ENCODE measurements at regions of chr17 and their contacts with region 1.

Region 1: DNA sequence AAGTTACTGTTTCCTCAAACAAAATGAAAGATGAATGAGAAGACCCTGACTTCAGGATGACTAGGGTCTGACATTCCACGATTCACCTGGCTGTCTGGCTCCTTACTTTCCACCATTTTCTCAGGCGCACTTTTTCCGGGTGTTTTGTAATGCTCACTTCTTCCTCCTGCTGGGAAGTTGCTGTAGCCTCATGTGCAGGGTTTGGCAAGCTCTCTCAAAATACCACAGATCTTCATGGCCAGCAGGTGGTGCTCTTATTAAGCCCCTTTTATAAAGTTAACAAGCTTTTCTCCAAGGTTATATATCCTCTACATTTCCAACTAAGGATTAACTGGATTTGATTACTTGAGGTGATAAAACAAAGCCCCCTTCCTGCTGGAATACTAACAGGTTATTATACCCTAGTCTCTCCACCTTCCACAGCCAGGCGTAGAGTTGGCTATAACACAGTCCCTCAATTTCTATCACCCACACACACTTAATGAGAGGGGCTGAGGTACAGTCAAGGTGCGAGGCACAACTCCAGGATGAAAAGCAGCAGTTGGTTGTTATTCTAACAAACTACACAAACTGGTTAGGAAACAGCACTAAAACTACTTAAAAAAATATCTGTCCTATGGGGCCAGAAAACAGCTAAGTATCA is 45.4 kb downstream of the STH start:
- DNase-seq: peak; percentile 92
- ATAC-seq: peak; percentile 75
- H3K4me3 ChIP-seq: no peak overlapping the region
- H3K27ac ChIP-seq: no peak overlapping the region
- H3K4me1 ChIP-seq: peaks cover 11% of the 10 kb centered on the region; the same call in 1 of the 2 replicates
- H3K27me3 ChIP-seq: no peaks in the 10 kb centered on the region
- CTCF ChIP-seq: peak; percentile 99

Region 2: DNA sequence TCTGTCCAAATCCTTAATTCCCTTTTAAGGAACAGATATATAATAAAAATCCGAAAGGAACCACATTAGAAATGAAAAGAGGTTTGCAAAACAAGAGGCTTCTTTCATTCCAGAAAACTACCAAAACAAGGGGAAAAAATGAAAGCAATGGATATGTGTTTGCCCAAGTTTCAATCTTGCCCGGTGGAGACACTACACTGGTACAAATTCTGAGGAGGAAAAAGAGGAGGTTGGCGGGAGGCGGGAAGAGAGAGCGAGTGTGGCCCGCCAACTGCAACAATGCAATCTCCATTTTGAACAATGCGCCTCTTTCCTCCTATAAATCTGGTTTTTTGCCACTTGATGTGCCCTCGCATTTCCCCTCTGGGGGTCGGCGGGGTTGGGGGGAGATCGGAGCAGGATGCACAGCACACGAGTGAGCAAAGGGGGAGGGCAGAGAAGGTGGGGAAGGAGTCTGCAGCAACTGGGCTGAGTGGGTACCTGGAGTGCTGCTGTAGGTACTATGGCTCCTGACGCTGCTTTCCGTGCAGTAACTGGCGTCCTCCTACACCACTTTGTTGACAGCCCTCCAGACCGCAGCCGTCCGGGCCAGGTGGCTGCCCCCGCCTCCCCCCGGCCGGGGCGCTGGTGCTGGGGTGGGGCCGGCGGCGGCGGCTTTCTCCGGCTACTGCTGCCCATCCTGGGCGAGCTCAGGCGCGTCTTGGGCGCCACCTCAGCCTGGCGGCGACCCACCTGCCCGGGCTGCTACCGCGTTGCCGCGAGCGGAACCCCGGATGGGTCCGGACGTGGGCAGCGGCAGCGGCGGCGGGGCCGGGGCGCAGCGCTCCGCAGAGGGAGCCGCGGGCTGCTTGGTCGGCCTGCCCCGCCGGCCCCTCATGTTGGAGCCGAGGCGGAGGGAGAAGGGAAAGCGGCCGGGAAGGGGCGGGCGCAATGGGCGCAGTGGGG is 460.0 kb before region 1 on chr17:
- CTCF ChIA-PET with region 1: no interaction called
- POLR2A ChIA-PET with region 1: no interaction called
- intact Hi-C with region 1: no loop called
- DNase-seq: peak; percentile 91
- ATAC-seq: peak; percentile 66
- H3K4me3 ChIP-seq: peak overlapping the region; percentile 74
- H3K27ac ChIP-seq: peak overlapping the region; percentile 57
- H3K4me1 ChIP-seq: peaks cover 12% of the 10 kb centered on the region
- H3K27me3 ChIP-seq: no peaks in the 10 kb centered on the region
- CTCF ChIP-seq: no peak

Region 3: DNA sequence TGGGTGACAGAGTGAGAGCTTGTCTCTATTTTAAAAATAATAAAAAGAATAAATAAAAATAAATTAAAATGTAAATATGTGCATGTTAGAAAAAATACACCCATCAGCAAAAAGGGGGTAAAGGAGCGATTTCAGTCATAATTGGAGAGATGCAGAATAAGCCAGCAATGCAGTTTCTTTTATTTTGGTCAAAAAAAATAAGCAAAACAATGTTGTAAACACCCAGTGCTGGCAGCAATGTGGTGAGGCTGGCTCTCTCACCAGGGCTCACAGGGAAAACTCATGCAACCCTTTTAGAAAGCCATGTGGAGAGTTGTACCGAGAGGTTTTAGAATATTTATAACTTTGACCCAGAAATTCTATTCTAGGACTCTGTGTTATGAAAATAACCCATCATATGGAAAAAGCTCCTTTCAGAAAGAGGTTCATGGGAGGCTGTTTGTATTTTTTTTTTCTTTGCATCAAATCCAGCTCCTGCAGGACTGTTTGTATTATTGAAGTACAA is 36.9 kb before region 1 on chr17:
- CTCF ChIA-PET with region 1: interaction called, 5 read pairs
- POLR2A ChIA-PET with region 1: interaction called, 10 read pairs
- intact Hi-C with region 1: loop called (anchors 1 kb)
- DNase-seq: no peak
- ATAC-seq: no peak
- H3K4me3 ChIP-seq: no peak overlapping the region
- H3K27ac ChIP-seq: no peak overlapping the region
- H3K4me1 ChIP-seq: peaks cover 12% of the 10 kb centered on the region
- H3K27me3 ChIP-seq: no peaks in the 10 kb centered on the region
- CTCF ChIP-seq: no peak

Region 4: DNA sequence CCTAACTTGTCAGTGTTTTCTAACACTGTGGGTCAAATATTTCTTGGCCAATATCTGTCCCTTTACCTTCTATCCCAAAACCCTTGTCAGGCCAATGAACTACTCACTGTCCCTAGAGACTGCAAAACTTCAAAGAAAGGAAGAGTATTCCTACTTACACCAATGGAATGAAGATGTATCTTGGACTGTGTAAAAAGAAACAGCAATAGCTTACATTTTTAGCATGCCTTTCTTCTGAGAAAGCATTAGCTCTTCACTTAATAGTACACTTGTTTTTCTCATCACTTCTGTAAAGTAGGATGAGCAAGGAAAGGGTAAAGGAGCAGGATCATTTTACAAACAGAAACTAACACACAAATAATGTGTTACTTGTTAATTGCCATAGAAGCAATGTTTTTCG is 28.6 kb after region 1 on chr17:
- CTCF ChIA-PET with region 1: no interaction called
- POLR2A ChIA-PET with region 1: no interaction called
- intact Hi-C with region 1: no loop called
- DNase-seq: peak; percentile 60
- ATAC-seq: peak; percentile 70
- H3K4me3 ChIP-seq: no peak overlapping the region
- H3K27ac ChIP-seq: no peak overlapping the region
- H3K4me1 ChIP-seq: 0 out of 2 replicates have a peak, but pooled peaks cover 14% of the 10 kb centered on the region
- H3K27me3 ChIP-seq: no peaks in the 10 kb centered on the region
- CTCF ChIP-seq: no peak

Region 5: DNA sequence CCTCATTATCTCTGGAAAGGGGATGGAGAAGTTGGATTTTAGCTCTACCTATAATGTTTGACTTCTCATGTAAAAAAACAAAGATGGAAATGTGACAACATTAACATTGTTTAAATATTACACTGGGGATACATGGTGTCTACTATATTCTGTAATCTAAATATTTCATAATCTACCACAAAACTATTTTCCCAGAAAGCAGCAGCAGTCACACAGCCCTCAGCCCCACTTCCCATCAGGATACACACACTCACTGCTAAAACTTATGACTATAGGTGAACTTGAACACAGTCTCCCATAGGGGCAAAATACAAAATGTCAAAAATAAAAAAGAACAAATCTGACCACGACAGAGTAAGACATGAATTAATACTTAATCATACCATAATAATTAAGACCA is 53.1 kb after region 1 on chr17:
- CTCF ChIA-PET with region 1: no interaction called
- POLR2A ChIA-PET with region 1: interaction called, 31 read pairs
- intact Hi-C with region 1: loop called (anchors 5 kb)
- DNase-seq: no peak
- ATAC-seq: no peak
- H3K4me3 ChIP-seq: no peak overlapping the region
- H3K27ac ChIP-seq: no peak overlapping the region
- H3K4me1 ChIP-seq: peaks cover 9% of the 10 kb centered on the region
- H3K27me3 ChIP-seq: no peaks in the 10 kb centered on the region
- CTCF ChIP-seq: no peak

Region 6: GRCh38 chr17:46193626-46194392 is 149.4 kb after region 1 on chr17:
- CTCF ChIA-PET with region 1: interaction called, 28 read pairs
- POLR2A ChIA-PET with region 1: no interaction called
- intact Hi-C with region 1: loop called (anchors 1 kb)
- DNase-seq: peak; percentile 99
- ATAC-seq: peak; percentile 92
- H3K4me3 ChIP-seq: peak overlapping the region; percentile 87
- H3K27ac ChIP-seq: peak overlapping the region; percentile 83
- H3K4me1 ChIP-seq: peaks cover 24% of the 10 kb centered on the region
- H3K27me3 ChIP-seq: no peaks in the 10 kb centered on the region
- CTCF ChIP-seq: peak; percentile 41; the same call in 1 of the 2 replicates